ENCODE measurements at regions of chr19 and their contacts with region 1.

Region 1: GRCh38 chr19:35931161-35931873 is 4.9 kb upstream of the LRFN3 start:
- H3K4me3 ChIP-seq: peak overlapping the region; percentile 12
- H3K27ac ChIP-seq: peak overlapping the region; percentile 33; the same call in 1 of the 2 replicates
- H3K4me1 ChIP-seq: peaks cover 11% of the 10 kb centered on the region
- CTCF ChIP-seq: peak; percentile 100

Region 2: DNA sequence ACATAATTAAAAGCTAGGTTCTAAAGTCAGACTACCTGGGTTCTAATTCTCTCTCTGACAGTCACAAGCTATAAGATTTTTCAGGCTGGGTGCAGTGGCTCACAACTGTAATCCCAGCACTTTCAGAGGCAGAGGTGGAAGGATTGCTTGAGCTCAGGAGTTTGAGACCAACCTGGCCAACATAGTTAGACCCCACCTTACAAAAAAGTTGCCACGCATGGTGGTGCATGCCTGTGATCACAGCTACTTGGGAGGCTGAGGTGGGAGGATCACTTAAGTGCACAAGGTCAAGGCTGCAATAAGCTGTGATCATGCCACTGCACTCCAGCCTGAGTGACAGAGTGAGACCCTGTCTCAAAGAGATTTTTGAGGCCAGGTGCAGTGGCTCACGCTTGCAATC is 37.0 kb before region 1 on chr19:
- CTCF ChIA-PET with region 1: interaction called, 22 read pairs
- POLR2A ChIA-PET with region 1: interaction called, 6 read pairs
- H3K4me3 ChIP-seq: no peak overlapping the region
- H3K27ac ChIP-seq: no peak overlapping the region
- H3K4me1 ChIP-seq: peaks cover 5% of the 10 kb centered on the region
- CTCF ChIP-seq: no peak

Region 3: GRCh38 chr19:35911790-35912189 is 19.5 kb before region 1 on chr19:
- CTCF ChIA-PET with region 1: interaction called, 13 read pairs
- POLR2A ChIA-PET with region 1: interaction called, 4 read pairs
- H3K4me3 ChIP-seq: no peak overlapping the region
- H3K27ac ChIP-seq: no peak overlapping the region
- H3K4me1 ChIP-seq: no peaks in the 10 kb centered on the region
- CTCF ChIP-seq: no peak

Region 4: DNA sequence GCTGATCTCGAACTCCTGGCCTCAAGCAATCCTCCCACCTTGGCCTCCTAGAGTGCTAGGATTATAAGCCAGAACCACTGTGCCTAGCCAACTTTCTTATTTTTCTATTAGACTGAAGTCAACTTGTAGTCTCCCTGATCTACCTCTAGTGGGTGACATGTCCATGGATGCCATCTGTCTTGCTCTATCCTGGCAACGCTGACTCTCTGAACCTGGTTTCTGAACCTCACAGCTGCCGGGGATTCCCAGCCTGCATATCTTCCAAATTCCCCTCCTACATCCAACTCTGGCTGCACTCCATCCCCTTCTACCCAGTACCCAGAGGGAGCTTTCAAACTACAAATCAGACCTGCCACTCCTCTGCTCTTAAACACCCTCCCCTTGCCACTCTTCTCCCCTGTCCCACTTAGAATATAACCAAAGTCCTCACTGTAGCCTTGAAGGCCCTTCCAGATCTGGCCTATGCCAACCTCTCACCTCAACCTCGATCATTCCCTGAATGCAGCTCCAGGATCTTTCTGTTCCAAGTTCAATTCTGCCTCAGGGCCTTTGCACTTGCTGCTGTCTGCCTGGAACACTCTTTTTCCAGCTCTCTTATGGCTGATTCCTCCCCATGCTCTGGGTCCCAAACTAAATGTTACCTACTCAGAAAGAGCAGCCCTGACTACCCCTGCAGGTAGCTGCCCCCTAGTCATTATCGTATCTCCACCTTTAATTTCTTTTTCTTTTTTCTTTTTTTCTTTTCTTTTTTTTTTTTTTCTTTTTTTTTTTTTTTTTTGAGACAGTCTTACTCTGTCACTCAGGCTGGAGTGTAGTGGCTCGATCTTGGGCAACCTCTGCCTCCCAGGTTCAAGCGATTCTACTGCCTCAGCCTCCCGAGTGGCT is 99.2 kb after region 1 on chr19:
- CTCF ChIA-PET with region 1: no interaction called
- POLR2A ChIA-PET with region 1: no interaction called
- H3K4me3 ChIP-seq: no peak overlapping the region
- H3K27ac ChIP-seq: no peak overlapping the region
- H3K4me1 ChIP-seq: peaks cover 6% of the 10 kb centered on the region; the same call in 1 of the 2 replicates
- CTCF ChIP-seq: peak; percentile 58; the same call in 1 of the 2 replicates

Measured in HEK293 (cell line).